Gastrocnemius medialis (tissue), 4 donors: ENCODE measurements at regions of chr11 and their contacts with region 1.

Region 1: DNA sequence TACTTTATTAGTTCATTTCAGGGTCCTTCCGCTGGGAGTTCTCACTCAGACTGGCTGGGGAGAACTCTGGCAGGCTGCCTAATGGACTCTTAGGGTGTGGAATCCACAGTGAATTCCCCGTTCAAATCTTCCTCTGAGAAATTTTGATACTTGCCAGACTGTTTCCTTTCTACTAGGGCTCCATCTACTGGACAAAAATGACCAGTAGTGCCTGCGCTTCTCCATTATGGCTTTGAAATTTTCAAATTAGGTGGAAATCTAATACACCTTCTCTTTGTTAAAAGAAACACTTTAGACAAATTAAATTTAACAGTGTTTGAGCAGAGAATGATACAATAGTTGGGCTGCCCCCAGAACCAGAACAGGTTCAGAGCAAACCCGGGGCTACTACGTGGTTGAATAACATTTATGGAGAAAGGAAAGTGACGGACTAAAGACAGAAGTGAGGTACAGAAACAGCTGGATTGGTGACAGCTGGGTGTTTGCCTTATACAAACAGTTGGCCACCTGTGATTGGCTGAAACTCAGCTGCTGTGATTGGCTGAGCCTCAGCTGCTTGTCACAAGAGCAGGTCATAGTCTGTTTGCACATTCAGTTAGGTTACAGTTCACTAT is 52.9 kb upstream of the FDX1 start:
- DNase-seq: peak; percentile 40 to 71
- ATAC-seq: peak; percentile 93
- H3K4me3 ChIP-seq: peak overlapping the region; percentile 29 to 48 (median 37)
- H3K27ac ChIP-seq: peak overlapping the region; percentile 46 to 68 (median 57)
- H3K4me1 ChIP-seq: peaks cover 0 to 3% of the 10 kb centered on the region in 2 donors
- H3K27me3 ChIP-seq: no peaks in the 10 kb centered on the region
- CTCF ChIP-seq: peak; percentile 56 to 84 (median 67)
- POLR2A ChIP-seq: no peak

Region 2: GRCh38 chr11:109960831-109961230 is 416.0 kb before region 1 on chr11:
- in situ Hi-C with region 1: loop called in 1 of 4 experiments (anchors 10 kb)
- intact Hi-C with region 1: no loop called
- DNase-seq: peak; percentile 37 to 67
- ATAC-seq: peak; percentile 82 to 91
- H3K4me3 ChIP-seq: no peak overlapping the region
- H3K27ac ChIP-seq: peak overlapping the region in 1 of 4 donors; percentile 40
- H3K4me1 ChIP-seq: peaks cover 12 to 16% of the 10 kb centered on the region in 2 donors
- H3K27me3 ChIP-seq: no peaks in the 10 kb centered on the region
- CTCF ChIP-seq: no peak
- POLR2A ChIP-seq: no peak

Region 3: DNA sequence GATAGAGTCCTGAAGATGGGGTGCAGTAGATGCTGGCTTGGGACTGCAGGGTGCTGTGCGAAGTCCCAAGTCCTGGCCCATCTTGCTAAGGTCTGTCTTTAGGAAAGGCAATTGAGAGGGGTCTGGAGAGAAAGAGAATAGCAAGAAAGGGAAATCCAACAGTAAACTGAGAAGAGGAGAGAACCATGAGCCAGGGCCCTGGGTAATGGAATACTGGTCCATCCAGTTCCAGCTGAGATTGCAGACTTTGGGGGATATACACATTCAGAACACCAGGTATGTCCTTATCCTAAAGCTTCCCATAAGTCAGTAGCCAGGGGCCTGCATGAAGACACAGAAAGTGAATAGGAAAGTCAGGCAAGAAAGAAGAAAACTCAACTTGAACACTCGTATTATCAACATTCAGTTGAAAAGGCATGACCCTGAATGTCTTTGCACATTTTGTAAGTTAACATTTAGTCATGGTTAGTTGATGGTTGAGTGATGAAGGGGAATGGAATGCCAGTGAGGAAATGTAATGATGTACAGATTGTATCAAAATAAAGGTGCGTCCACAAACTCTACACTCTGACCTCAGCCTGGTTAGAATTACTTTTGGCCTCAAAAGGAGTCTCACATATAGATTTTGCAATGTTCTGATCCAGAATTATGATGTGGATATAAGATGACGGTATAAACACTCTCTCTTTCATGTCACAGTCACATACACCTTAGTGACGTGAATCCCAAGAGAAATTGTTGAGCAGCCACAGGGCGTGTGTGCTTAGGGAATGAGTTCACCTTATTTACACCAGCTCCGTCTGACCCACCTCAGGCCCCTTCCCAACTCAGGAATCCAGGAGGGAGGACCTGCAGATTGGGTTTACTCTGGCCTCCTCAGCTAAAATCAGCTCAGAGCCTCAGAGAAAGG is 180.7 kb before region 1 on chr11:
- in situ Hi-C with region 1: loop called (anchors 5 kb)
- intact Hi-C with region 1: loop called (anchors 1 kb)
- DNase-seq: no peak
- ATAC-seq: no peak
- H3K4me3 ChIP-seq: no peak overlapping the region
- H3K27ac ChIP-seq: no peak overlapping the region
- H3K4me1 ChIP-seq: no peaks in the 10 kb centered on the region
- H3K27me3 ChIP-seq: no peaks in the 10 kb centered on the region
- CTCF ChIP-seq: no peak
- POLR2A ChIP-seq: no peak

Region 4: GRCh38 chr11:110296226-110297075 is 80.4 kb before region 1 on chr11 and contains the start of gene RDX:
- in situ Hi-C with region 1: no loop called
- intact Hi-C with region 1: loop called (anchors 5 kb)
- DNase-seq: peak; percentile 47 to 78
- ATAC-seq: peak; percentile 91 to 96
- H3K4me3 ChIP-seq: peak within 1 kb of the TSS; percentile 77 to 96 (median 88)
- H3K27ac ChIP-seq: peak within 1 kb of the TSS; percentile 93 to 99 (median 96)
- H3K4me1 ChIP-seq: peaks cover 31 to 33% of the 10 kb centered on the region in 2 donors
- H3K27me3 ChIP-seq: no peaks in the 10 kb centered on the region
- CTCF ChIP-seq: peak in 2 of 5 experiments; percentile 34 to 35
- POLR2A ChIP-seq: peak; percentile 81 to 84
- total RNA-seq, gene RDX: 95.7 to 140 (median 115) TPM

Region 5: GRCh38 chr11:110429731-110430266 is 53.0 kb after region 1 on chr11 and contains the start of gene FDX1:
- in situ Hi-C with region 1: loop called in 1 of 4 experiments (anchors 10 kb)
- intact Hi-C with region 1: loop called (anchors 2 kb)
- DNase-seq: peak; percentile 53 to 73
- ATAC-seq: peak; percentile 91 to 92
- H3K4me3 ChIP-seq: peak within 1 kb of the TSS; percentile 62 to 88 (median 68)
- H3K27ac ChIP-seq: peak within 1 kb of the TSS; percentile 85 to 92 (median 90)
- H3K4me1 ChIP-seq: peaks cover 21 to 24% of the 10 kb centered on the region in 2 donors
- H3K27me3 ChIP-seq: no peaks in the 10 kb centered on the region
- CTCF ChIP-seq: peak in 4 of 5 experiments; percentile 75 to 90 (median 83)
- POLR2A ChIP-seq: peak; percentile 68 to 80
- total RNA-seq, gene FDX1: 13.3 to 25.0 (median 21.3) TPM

Region 6: DNA sequence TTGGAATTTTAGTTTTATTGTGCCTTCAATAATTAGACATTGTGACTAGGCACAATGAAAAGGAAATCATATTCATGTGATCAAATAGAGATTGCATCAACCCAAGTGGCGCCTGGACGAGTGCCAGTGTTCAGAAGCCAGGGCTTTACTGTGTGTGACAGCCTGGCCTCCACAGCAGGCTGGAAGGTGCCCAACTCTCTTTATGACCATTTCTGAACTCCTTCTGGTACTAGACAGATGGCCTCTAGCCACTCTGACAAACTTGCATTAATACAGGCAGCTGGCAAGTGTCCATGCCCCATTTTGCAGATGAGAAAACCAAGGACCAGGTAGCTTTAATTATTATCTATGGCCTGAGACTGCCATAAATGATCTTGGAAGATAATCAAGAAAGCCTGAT is 1010.5 kb after region 1 on chr11:
- in situ Hi-C with region 1: no loop called
- intact Hi-C with region 1: no loop called
- DNase-seq: no peak
- ATAC-seq: no peak
- H3K4me3 ChIP-seq: no peak overlapping the region
- H3K27ac ChIP-seq: no peak overlapping the region
- H3K4me1 ChIP-seq: no peaks in the 10 kb centered on the region
- H3K27me3 ChIP-seq: no peaks in the 10 kb centered on the region
- CTCF ChIP-seq: no peak
- POLR2A ChIP-seq: no peak